ENCODE measurements at regions of chr5 and their contacts with region 1.

Region 1: DNA sequence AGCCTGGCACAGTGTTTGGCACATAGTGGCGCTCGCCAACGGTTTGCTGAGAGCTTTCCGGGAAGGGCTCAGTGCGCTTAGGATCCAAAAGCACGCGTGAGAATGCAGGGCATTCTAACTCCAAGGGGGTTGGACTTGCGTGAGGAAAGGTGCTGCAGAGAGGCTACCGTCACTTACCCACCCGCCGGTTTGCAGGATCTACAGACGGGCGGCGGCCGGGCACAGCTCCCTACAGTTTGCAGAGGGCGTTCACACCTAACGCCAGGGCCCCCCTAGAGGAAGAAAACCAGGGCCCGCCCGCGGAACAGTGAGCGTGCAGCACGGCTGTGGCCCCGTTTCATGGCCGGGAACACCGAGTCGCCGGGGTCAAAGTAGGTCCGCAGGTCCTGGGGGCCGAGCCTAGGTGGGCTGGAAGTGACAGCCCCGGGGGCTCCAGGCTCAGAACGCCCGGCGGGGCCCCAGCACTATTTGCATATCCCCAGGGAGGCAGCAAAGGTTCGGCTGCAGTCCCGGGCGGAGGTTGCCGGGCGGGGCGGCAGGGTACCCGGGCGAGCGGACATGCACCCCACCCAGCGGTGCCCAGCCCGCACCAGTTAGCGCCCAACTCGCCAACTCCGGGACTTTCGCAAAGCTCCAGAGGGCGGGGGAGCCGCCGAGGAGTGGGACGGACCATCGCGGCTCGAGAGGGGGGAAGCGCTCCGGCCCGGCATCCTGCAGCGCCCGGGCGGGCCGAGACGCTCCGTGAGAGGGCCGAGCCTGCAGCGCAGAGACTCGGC is 526 bp upstream of the GALNT10 start:
- DNase-seq: peak; percentile 93
- H3K4me3 Mint-ChIP-seq: peak overlapping the region; percentile 81
- H3K27ac Mint-ChIP-seq: peak overlapping the region; percentile 15
- H3K4me1 Mint-ChIP-seq: peaks cover 44% of the 10 kb centered on the region
- H3K27me3 Mint-ChIP-seq: no peaks in the 10 kb centered on the region
- CTCF ChIP-seq: peak; percentile 56

Region 2: GRCh38 chr5:154202379-154203260 is 12.6 kb after region 1 on chr5:
- CTCF ChIA-PET with region 1: interaction called, 15 read pairs
- POLR2A ChIA-PET with region 1: interaction called, 22 read pairs
- intact Hi-C with region 1: no loop called
- DNase-seq: no peak
- H3K4me3 Mint-ChIP-seq: no peak overlapping the region
- H3K27ac Mint-ChIP-seq: peak overlapping the region; percentile 62
- H3K4me1 Mint-ChIP-seq: peaks cover 29% of the 10 kb centered on the region
- H3K27me3 Mint-ChIP-seq: no peaks in the 10 kb centered on the region
- CTCF ChIP-seq: no peak

Region 3: GRCh38 chr5:154221371-154221896 is 31.4 kb after region 1 on chr5:
- CTCF ChIA-PET with region 1: interaction called, 8 read pairs
- POLR2A ChIA-PET with region 1: interaction called, 31 read pairs
- intact Hi-C with region 1: no loop called
- DNase-seq: peak; percentile 83
- H3K4me3 Mint-ChIP-seq: no peak overlapping the region
- H3K27ac Mint-ChIP-seq: peak overlapping the region; percentile 88
- H3K4me1 Mint-ChIP-seq: peaks cover 36% of the 10 kb centered on the region
- H3K27me3 Mint-ChIP-seq: no peaks in the 10 kb centered on the region
- CTCF ChIP-seq: no peak

Region 4: DNA sequence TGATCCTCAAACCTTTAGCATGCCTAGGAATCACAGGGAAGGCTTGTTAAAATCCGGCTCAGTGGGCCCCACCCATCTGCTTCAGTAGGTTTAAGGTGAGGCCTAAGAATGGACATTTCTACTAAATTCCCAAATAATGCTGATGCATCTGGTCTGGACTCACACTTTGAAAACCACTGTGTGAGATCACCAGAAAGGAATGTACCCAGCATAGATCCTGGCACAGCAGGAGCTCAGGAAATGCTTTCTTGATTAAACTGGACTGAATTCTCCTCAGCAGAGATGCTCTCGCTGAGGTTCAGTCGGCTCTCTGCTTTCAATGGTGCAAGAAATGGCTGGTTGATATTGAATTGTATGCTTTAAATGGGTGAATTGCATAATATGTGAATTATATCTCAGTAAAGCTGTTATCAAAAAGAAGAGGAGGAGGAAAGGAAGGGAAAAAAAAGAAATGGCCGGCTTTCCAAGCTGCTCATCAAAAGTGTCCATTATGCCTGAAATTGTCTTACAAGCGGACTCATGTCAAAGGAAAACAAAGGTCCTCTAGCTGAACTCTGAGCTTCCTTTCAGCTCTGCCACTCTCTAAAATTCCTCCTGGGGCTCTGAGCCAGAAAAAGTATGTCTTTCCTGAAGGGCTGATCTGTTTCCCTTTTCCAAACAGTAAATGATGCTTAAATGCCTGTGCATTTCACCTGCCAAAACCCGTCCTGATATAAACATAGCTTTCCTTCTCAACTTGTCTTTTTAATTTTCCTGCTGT is 178.2 kb after region 1 on chr5:
- CTCF ChIA-PET with region 1: interaction called, 4 read pairs
- POLR2A ChIA-PET with region 1: interaction called, 16 read pairs
- intact Hi-C with region 1: no loop called
- DNase-seq: peak; percentile 98
- H3K4me3 Mint-ChIP-seq: peak overlapping the region; percentile 42
- H3K27ac Mint-ChIP-seq: peak overlapping the region; percentile 84
- H3K4me1 Mint-ChIP-seq: peaks cover 63% of the 10 kb centered on the region
- H3K27me3 Mint-ChIP-seq: no peaks in the 10 kb centered on the region
- CTCF ChIP-seq: no peak

Region 5: GRCh38 chr5:154593071-154593470 is 403.1 kb after region 1 on chr5:
- CTCF ChIA-PET with region 1: no interaction called
- POLR2A ChIA-PET with region 1: no interaction called
- intact Hi-C with region 1: no loop called
- DNase-seq: peak; percentile 80
- H3K4me3 Mint-ChIP-seq: no peak overlapping the region
- H3K27ac Mint-ChIP-seq: peak overlapping the region; percentile 59
- H3K4me1 Mint-ChIP-seq: peaks cover 21% of the 10 kb centered on the region
- H3K27me3 Mint-ChIP-seq: peaks cover 7% of the 10 kb centered on the region
- CTCF ChIP-seq: no peak

Measured in MCF 10A (cell line).